Activated T-helper 1 cell treated with anti-CD3 and anti-CD28 coated beads, Interleukin-12 subunit alpha, Interleukin-12 subunit beta, Interleukin-2, Interleukin-4 antibody, amounts not matched to agents 30 ng/mL and 10 ng/mL and 1 ng/mL, durations not matched to agents 14 hours and 24 hours and 36 hours (primary cell): ENCODE measurements at regions of chr9 and their contacts with region 1.

Region 1: GRCh38 chr9:128067876-128068613 is at the start of gene SLC25A25:
- DNase-seq: peak; percentile 100
- H3K4me3 Mint-ChIP-seq: peak within 1 kb of the TSS; percentile 92
- H3K27ac Mint-ChIP-seq: peak within 1 kb of the TSS; percentile 83
- H3K4me1 Mint-ChIP-seq: peaks cover 53% of the 10 kb centered on the region
- H3K27me3 Mint-ChIP-seq: no peaks in the 10 kb centered on the region
- total RNA-seq, gene SLC25A25: 13.4 and 13.5 TPM in 2 replicates

Region 2: GRCh38 chr9:127770905-127771569 is 297.0 kb before region 1 on chr9:
- intact Hi-C with region 1: loop called (anchors 1 kb)
- DNase-seq: peak; percentile 99
- H3K4me3 Mint-ChIP-seq: peak overlapping the region; percentile 86
- H3K27ac Mint-ChIP-seq: peak overlapping the region; percentile 90
- H3K4me1 Mint-ChIP-seq: peaks cover 63% of the 10 kb centered on the region
- H3K27me3 Mint-ChIP-seq: no peaks in the 10 kb centered on the region

Region 3: GRCh38 chr9:127970401-127971313 is 97.4 kb before region 1 on chr9:
- intact Hi-C with region 1: loop called (anchors 1 kb)
- DNase-seq: peak; percentile 74
- H3K4me3 Mint-ChIP-seq: peak overlapping the region; percentile 69
- H3K27ac Mint-ChIP-seq: peak overlapping the region; percentile 87
- H3K4me1 Mint-ChIP-seq: peaks cover 91% of the 10 kb centered on the region
- H3K27me3 Mint-ChIP-seq: no peaks in the 10 kb centered on the region

Region 4: DNA sequence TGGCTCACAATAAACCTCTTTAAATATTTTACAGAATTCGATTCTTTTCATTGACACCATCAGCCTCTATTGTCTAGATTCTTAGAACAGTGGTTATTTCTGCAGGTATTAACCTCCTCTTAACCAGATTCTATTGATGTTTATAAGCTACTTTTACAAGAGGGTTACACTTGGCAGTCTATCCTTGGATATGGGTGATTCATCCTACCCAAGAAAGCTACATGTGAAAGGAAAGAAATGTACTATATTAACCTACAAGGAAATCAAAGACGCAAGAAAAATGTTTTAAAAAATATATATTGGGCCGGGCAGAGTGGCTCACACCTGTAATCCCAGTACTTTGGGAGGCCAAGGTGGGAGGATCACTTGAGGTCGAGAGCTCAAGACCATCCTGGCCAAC is 16.7 kb after region 1 on chr9:
- intact Hi-C with region 1: loop called (anchors 2 kb)
- DNase-seq: no peak
- H3K4me3 Mint-ChIP-seq: no peak overlapping the region
- H3K27ac Mint-ChIP-seq: no peak overlapping the region
- H3K4me1 Mint-ChIP-seq: peaks cover 30% of the 10 kb centered on the region
- H3K27me3 Mint-ChIP-seq: no peaks in the 10 kb centered on the region

Region 5: DNA sequence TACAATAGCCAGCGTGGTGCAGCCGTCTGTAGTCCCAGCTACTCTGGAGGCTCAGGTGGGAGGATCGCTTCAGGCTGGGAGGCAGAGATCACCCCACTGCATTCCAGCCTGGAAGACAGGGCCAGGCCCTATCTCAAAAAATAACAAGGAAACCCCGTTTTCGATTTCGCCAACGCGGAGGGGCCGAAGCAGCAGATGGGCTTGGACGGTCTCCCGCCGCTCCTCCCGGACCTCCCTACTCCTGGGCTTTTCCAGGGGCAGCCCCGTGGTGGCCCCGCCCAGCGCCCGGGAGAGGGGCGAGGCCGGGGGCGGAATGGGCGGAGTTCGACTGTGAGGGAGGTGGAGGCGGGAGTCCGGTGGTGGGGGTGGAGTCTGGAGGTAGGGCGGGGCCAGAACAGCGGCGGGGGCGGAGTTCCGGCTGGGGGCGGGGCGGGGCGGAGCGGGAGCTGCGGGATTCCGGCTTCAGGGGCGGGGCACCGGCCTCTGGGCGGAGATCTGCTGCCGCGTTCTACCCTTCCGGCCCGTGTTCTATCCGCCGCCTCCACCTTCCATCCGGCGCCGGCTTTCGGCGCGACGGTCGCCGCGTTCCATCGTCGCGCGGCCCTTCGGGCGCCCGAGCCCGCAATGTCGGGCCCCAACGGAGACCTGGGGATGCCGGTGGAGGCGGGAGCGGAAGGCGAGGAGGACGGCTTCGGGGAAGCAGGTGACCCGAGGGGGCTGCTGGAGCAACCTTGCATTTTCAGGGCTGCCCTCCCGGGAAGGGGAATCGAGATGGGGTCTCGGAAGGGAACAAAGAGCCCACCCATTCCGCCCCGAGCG is 91.9 kb after region 1 on chr9 and contains the start of gene BBLN:
- intact Hi-C with region 1: loop called (anchors 1 kb)
- DNase-seq: peak; percentile 88
- H3K4me3 Mint-ChIP-seq: peak within 1 kb of the TSS; percentile 84
- H3K27ac Mint-ChIP-seq: peak within 1 kb of the TSS; percentile 93
- H3K4me1 Mint-ChIP-seq: peaks cover 14% of the 10 kb centered on the region
- H3K27me3 Mint-ChIP-seq: peaks cover 2% of the 10 kb centered on the region
- total RNA-seq, gene BBLN: 97.3 and 106 TPM in 2 replicates